CD8-positive, alpha-beta T cell (primary cell): ENCODE measurements at regions of chr22 and their contacts with region 1.

Region 1: GRCh38 chr22:40177738-40178416 is at the start of gene TNRC6B:
- DNase-seq: peak; percentile 35 to 96 (median 74)
- ATAC-seq: peak; percentile 76
- H3K4me3 ChIP-seq: peak within 1 kb of the TSS; percentile 59 to 71
- H3K4me3 Mint-ChIP-seq: peak within 1 kb of the TSS; percentile 82
- H3K27ac ChIP-seq: peak within 1 kb of the TSS; percentile 60 to 71
- H3K27ac Mint-ChIP-seq: peak within 1 kb of the TSS; percentile 83
- H3K4me1 ChIP-seq: peaks cover 51% of the 10 kb centered on the region
- H3K4me1 Mint-ChIP-seq: peaks cover 60% of the 10 kb centered on the region
- H3K27me3 ChIP-seq: no peaks in the 10 kb centered on the region
- H3K27me3 Mint-ChIP-seq: no peaks in the 10 kb centered on the region
- CTCF ChIP-seq: no peak
- total RNA-seq, gene TNRC6B: 85.3 to 106 TPM

Region 2: DNA sequence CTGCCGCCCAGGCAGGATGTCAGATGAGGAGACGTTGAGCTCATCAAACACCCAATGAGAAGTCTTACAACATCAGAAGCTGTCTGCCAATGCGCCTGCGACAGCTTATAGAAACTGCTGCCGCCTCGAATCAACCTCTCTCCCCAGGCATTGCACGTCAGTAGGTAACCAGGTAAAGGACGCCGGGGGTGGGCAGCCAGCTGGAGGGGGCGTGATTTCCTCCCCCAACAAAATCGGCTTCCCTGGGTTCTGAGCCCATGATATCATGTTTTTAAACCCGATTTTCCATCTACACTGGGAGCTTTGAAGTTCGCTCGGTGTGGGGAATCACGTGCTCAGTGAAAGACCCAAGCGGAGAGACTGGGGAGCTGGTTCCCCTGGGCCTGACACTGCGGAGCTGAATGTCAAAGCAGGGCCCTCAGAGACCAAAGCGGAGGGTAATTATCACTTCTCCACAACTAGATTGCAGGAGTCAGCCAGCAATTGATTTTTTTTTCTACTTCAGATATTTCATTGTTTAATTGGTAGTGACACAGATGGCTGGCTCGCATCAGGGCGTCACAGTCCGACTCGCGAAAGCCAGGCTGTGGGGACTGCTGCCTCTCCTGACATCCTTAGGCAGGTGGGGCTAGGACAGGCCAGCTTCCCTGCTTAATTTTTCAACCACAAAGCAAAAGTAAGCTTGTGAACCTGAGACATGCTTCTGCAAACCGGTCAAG is 167.8 kb before region 1 on chr22:
- CTCF ChIA-PET with region 1: no interaction called
- POLR2A ChIA-PET with region 1: no interaction called
- intact Hi-C with region 1: no loop called
- DNase-seq: peak in 6 of 9 experiments; percentile 21 to 80 (median 57)
- ATAC-seq: peak; percentile 93
- H3K4me3 ChIP-seq: peak overlapping the region; percentile 24 to 29
- H3K4me3 Mint-ChIP-seq: peak overlapping the region; percentile 81
- H3K27ac ChIP-seq: no peak overlapping the region
- H3K27ac Mint-ChIP-seq: peak overlapping the region; percentile 88
- H3K4me1 ChIP-seq: peaks cover 11% of the 10 kb centered on the region
- H3K4me1 Mint-ChIP-seq: peaks cover 10% of the 10 kb centered on the region
- H3K27me3 ChIP-seq: peaks cover 0 to 4% of the 10 kb centered on the region in 2 experiments
- H3K27me3 Mint-ChIP-seq: peaks cover 11% of the 10 kb centered on the region
- CTCF ChIP-seq: no peak

Region 3: GRCh38 chr22:40116496-40117200 is 61.2 kb before region 1 on chr22:
- CTCF ChIA-PET with region 1: no interaction called
- POLR2A ChIA-PET with region 1: no interaction called
- intact Hi-C with region 1: loop called (anchors 1 to 10 kb)
- DNase-seq: peak; percentile 24 to 89 (median 68)
- ATAC-seq: peak; percentile 89
- H3K4me3 ChIP-seq: peak overlapping the region in 1 of 2 experiments; percentile 30
- H3K4me3 Mint-ChIP-seq: peak overlapping the region; percentile 52
- H3K27ac ChIP-seq: peak overlapping the region; percentile 29 to 51
- H3K27ac Mint-ChIP-seq: peak overlapping the region; percentile 85
- H3K4me1 ChIP-seq: peaks cover 74% of the 10 kb centered on the region
- H3K4me1 Mint-ChIP-seq: peaks cover 87% of the 10 kb centered on the region
- H3K27me3 ChIP-seq: no peaks in the 10 kb centered on the region
- H3K27me3 Mint-ChIP-seq: no peaks in the 10 kb centered on the region
- CTCF ChIP-seq: no peak

Region 4: GRCh38 chr22:40193429-40194421 is 15.8 kb after region 1 on chr22:
- CTCF ChIA-PET with region 1: interaction called, 16 read pairs
- POLR2A ChIA-PET with region 1: interaction called, 8 read pairs
- intact Hi-C with region 1: no loop called
- DNase-seq: peak in 1 of 9 experiments; percentile 52
- ATAC-seq: peak; percentile 61
- H3K4me3 ChIP-seq: no peak overlapping the region
- H3K4me3 Mint-ChIP-seq: peak overlapping the region; percentile 32
- H3K27ac ChIP-seq: peak overlapping the region in 1 of 2 experiments; percentile 4
- H3K27ac Mint-ChIP-seq: peak overlapping the region; percentile 82
- H3K4me1 ChIP-seq: peaks cover 50% of the 10 kb centered on the region
- H3K4me1 Mint-ChIP-seq: peaks cover 82% of the 10 kb centered on the region
- H3K27me3 ChIP-seq: no peaks in the 10 kb centered on the region
- H3K27me3 Mint-ChIP-seq: no peaks in the 10 kb centered on the region
- CTCF ChIP-seq: peak; percentile 45

Region 5: DNA sequence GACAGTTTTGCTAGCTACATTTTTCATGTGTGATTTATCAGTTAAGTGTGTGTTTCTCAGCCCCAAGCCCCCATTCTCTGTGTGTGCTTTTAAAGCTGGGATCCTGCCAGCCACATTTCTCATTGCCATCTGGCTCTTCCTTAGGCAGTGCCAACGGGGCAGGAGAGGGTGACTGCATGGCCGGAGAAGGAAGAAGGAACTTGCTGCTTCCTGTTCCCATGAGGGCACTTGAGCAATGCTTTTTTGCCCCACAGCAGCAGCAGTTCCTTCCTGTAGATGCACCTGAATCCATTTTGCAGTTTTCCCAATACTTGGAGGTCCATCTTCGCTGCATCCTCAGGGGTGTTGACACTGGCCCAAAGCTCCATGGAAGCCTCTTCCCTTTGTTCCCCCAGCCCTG is 37.4 kb after region 1 on chr22:
- CTCF ChIA-PET with region 1: no interaction called
- POLR2A ChIA-PET with region 1: interaction called, 4 read pairs
- intact Hi-C with region 1: loop called in 1 of 2 experiments (anchors 2 kb)
- DNase-seq: peak in 2 of 9 experiments; percentile 38 to 47
- ATAC-seq: no peak
- H3K4me3 ChIP-seq: no peak overlapping the region
- H3K4me3 Mint-ChIP-seq: peak overlapping the region; percentile 35
- H3K27ac ChIP-seq: peak overlapping the region in 1 of 2 experiments; percentile 64
- H3K27ac Mint-ChIP-seq: peak overlapping the region; percentile 94
- H3K4me1 ChIP-seq: peaks cover 87% of the 10 kb centered on the region
- H3K4me1 Mint-ChIP-seq: peaks cover 93% of the 10 kb centered on the region
- H3K27me3 ChIP-seq: no peaks in the 10 kb centered on the region
- H3K27me3 Mint-ChIP-seq: no peaks in the 10 kb centered on the region
- CTCF ChIP-seq: no peak

Region 6: DNA sequence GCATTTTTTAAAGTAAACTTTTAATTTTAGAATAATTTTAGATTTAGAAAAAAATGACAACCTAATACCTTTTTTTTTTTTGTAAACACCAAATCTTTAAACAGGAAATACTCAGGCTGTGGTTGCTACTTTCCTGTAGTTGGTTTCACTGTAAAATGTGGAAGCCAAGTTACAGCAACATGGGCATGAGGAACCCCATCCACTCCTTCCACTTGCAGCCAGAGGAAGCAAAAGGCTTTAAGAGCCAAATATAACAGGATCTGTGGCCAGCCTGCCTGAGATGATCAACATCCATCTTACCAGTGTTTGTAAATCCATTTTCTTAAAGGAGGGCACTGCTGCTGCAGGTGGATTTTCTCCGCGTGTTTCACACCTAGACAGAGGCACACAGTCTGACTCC is 66.0 kb after region 1 on chr22:
- CTCF ChIA-PET with region 1: interaction called, 3 read pairs
- POLR2A ChIA-PET with region 1: interaction called, 3 read pairs
- intact Hi-C with region 1: loop called in 1 of 2 experiments (anchors 2 kb)
- DNase-seq: peak in 3 of 9 experiments; percentile 22 to 68 (median 47)
- ATAC-seq: no peak
- H3K4me3 ChIP-seq: no peak overlapping the region
- H3K4me3 Mint-ChIP-seq: peak overlapping the region; percentile 38
- H3K27ac ChIP-seq: peak overlapping the region in 1 of 2 experiments; percentile 11
- H3K27ac Mint-ChIP-seq: peak overlapping the region; percentile 71
- H3K4me1 ChIP-seq: peaks cover 78% of the 10 kb centered on the region
- H3K4me1 Mint-ChIP-seq: peaks cover 80% of the 10 kb centered on the region
- H3K27me3 ChIP-seq: no peaks in the 10 kb centered on the region
- H3K27me3 Mint-ChIP-seq: no peaks in the 10 kb centered on the region
- CTCF ChIP-seq: no peak

Region 7: GRCh38 chr22:40326905-40327735 is 149.2 kb after region 1 on chr22:
- CTCF ChIA-PET with region 1: no interaction called
- POLR2A ChIA-PET with region 1: interaction called, 3 read pairs
- intact Hi-C with region 1: loop called in 1 of 2 experiments (anchors 5 kb)
- DNase-seq: peak in 2 of 9 experiments; percentile 44 to 62
- ATAC-seq: peak; percentile 7
- H3K4me3 ChIP-seq: peak overlapping the region in 1 of 2 experiments; percentile 3
- H3K4me3 Mint-ChIP-seq: peak overlapping the region; percentile 53
- H3K27ac ChIP-seq: peak overlapping the region; percentile 9 to 54
- H3K27ac Mint-ChIP-seq: peak overlapping the region; percentile 92
- H3K4me1 ChIP-seq: peaks cover 96% of the 10 kb centered on the region
- H3K4me1 Mint-ChIP-seq: peaks cover 99% of the 10 kb centered on the region
- H3K27me3 ChIP-seq: no peaks in the 10 kb centered on the region
- H3K27me3 Mint-ChIP-seq: no peaks in the 10 kb centered on the region
- CTCF ChIP-seq: no peak

Region 8: DNA sequence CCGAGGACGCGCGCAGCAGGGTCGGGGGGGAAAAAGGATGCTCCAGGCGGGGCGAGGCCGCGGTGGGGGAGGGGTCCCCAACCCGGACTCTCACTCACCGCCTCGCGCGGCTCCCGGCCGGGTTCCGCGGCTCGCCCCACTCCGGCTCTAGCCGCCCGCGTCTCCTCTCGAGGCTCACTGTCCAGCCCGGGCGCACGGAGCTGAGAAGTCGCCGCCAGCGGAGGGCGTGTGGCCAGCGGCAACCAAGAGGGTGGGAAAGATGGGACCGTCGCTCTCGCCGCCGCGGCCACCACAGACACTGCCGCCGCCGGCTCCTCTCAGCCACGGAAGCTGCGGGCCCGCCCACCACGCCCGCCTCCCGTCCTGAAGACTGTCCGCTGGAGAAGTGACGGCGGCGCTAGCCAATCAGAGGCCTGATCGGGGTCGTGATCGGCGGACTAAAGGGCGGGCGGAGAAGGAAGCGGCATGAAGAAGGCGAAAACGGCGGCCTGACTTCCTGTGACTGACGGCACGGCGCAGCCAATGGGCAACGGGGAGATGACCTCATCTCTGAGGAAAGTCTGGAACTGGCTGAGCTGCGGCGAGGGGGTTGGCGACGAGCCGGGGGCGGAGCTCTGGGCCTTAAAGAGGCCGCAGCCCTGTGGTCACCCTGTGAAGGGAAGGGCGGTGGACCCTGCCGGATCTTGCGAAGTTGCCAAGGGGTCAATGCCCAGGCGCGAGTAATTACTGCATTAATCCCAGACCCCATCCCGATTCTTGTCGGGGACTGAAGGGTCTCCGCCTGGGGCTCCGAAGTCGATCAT is 458.7 kb after region 1 on chr22 and contains the start of gene MRTFA:
- CTCF ChIA-PET with region 1: no interaction called
- POLR2A ChIA-PET with region 1: interaction called, 4 read pairs
- intact Hi-C with region 1: loop called (anchors 1 to 2 kb)
- DNase-seq: peak; percentile 98 to 100 (median 99)
- ATAC-seq: peak; percentile 93
- H3K4me3 ChIP-seq: peak within 1 kb of the TSS; percentile 98 to 100
- H3K4me3 Mint-ChIP-seq: peak within 1 kb of the TSS; percentile 99
- H3K27ac ChIP-seq: peak within 1 kb of the TSS; percentile 89
- H3K27ac Mint-ChIP-seq: peak within 1 kb of the TSS; percentile 98
- H3K4me1 ChIP-seq: peaks cover 34% of the 10 kb centered on the region
- H3K4me1 Mint-ChIP-seq: peaks cover 45% of the 10 kb centered on the region
- H3K27me3 ChIP-seq: no peaks in the 10 kb centered on the region
- H3K27me3 Mint-ChIP-seq: no peaks in the 10 kb centered on the region
- CTCF ChIP-seq: no peak
- total RNA-seq, gene MRTFA: 53.7 to 56.7 TPM

Region 9: GRCh38 chr22:42070517-42071422 is 1892.9 kb after region 1 on chr22 and contains the start of gene NAGA:
- CTCF ChIA-PET with region 1: no interaction called
- POLR2A ChIA-PET with region 1: no interaction called
- intact Hi-C with region 1: no loop called
- DNase-seq: peak; percentile 75 to 96 (median 88)
- ATAC-seq: peak; percentile 98
- H3K4me3 ChIP-seq: peak within 1 kb of the TSS; percentile 89 to 97
- H3K4me3 Mint-ChIP-seq: peak within 1 kb of the TSS; percentile 88
- H3K27ac ChIP-seq: peak within 1 kb of the TSS; percentile 50 to 71
- H3K27ac Mint-ChIP-seq: peak within 1 kb of the TSS; percentile 86
- H3K4me1 ChIP-seq: peaks cover 23% of the 10 kb centered on the region
- H3K4me1 Mint-ChIP-seq: peaks cover 37% of the 10 kb centered on the region
- H3K27me3 ChIP-seq: no peaks in the 10 kb centered on the region
- H3K27me3 Mint-ChIP-seq: no peaks in the 10 kb centered on the region
- CTCF ChIP-seq: no peak
- total RNA-seq, gene NAGA: 1.8 to 2.0 TPM